Posterior vena cava (tissue), 2 donors: ENCODE measurements at regions of chr3 and their contacts with region 1.

Region 1: GRCh38 chr3:113223475-113224281 is 12.3 kb downstream of the BOC start:
- DNase-seq: no peak

Region 2: DNA sequence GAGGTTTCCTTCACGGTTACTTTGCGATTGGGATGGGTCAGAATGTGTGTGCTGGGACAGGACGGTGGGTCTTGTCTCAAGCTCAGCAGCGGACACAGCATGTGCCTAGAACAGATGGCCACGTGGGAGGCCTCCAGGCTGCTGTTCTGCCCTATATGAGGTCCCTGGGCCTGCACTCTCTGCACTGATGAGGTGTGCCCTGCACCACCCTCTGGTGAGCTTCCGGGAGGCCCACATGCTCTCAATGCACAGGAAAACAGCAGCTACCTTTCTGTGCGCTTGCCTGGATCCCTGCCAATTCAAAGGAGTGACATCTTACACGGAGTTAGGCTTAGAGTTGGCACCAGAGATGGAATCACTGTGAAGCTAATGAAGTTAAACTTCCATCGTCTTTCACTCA is 47.5 kb after region 1 on chr3:
- intact Hi-C with region 1: loop called in 1 of 2 experiments (anchors 5 kb)
- DNase-seq: no peak